ENCODE measurements at regions of chr2 and their contacts with region 1.

Region 1: DNA sequence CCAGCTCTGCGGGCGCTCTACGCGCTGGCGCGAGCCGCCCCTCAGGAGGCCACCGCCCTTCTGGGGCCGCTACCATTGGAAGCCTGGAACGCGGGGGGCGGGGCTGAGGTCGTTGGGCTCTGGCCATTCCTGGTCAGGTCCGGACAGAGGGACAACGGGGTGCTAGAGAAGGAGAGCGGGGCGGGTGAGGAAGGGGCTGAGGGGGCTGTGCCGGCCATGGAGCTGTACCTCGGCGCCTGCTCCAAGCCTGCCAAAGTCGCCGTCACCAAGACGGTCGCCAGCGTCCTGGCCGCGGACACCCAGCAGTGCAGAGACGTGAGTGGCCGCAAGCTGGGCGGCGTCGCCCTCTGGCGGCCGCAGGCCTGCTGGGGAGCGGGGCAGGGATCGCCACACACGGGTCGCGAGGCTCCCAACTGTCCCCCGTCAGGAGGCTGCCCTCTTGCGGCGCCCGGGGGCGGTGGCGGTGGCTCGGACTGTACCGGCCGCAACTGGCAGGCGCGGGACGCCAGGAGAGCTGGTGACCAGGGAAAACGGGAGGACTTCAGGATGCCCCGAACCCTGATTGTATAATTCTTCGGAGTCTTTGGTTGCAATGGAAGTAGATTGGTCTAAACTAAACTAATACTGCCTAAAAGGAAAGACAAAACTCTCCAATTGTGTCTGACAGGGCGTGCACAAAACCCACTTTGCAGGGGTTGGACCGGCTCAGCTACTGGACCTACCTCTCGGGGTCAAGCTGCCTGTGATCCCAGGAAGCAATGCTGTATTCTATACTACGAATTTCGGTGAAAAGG is at the start of gene FSIP2:
- DNase-seq: peak; percentile 89 to 95
- H3K4me3 ChIP-seq: peak within 1 kb of the TSS; percentile 47
- H3K4me1 ChIP-seq: no peaks in the 10 kb centered on the region
- H3K27me3 ChIP-seq: no peaks in the 10 kb centered on the region

Region 2: GRCh38 chr2:185208261-185208660 is 530.6 kb before region 1 on chr2:
- in situ Hi-C with region 1: loop called (anchors 10 kb)
- DNase-seq: peak; percentile 64 to 75
- H3K4me3 ChIP-seq: no peak overlapping the region
- H3K4me1 ChIP-seq: no peaks in the 10 kb centered on the region
- H3K27me3 ChIP-seq: no peaks in the 10 kb centered on the region

Region 3: GRCh38 chr2:185291035-185291647 is 447.7 kb before region 1 on chr2:
- in situ Hi-C with region 1: loop called (anchors 10 kb)
- DNase-seq: peak; percentile 61 to 77
- H3K4me3 ChIP-seq: no peak overlapping the region
- H3K4me1 ChIP-seq: no peaks in the 10 kb centered on the region
- H3K27me3 ChIP-seq: no peaks in the 10 kb centered on the region

Region 4: GRCh38 chr2:185522472-185522871 is 216.4 kb before region 1 on chr2:
- in situ Hi-C with region 1: loop called (anchors 25 kb)
- DNase-seq: no peak
- H3K4me3 ChIP-seq: no peak overlapping the region
- H3K4me1 ChIP-seq: no peaks in the 10 kb centered on the region
- H3K27me3 ChIP-seq: no peaks in the 10 kb centered on the region

Region 5: DNA sequence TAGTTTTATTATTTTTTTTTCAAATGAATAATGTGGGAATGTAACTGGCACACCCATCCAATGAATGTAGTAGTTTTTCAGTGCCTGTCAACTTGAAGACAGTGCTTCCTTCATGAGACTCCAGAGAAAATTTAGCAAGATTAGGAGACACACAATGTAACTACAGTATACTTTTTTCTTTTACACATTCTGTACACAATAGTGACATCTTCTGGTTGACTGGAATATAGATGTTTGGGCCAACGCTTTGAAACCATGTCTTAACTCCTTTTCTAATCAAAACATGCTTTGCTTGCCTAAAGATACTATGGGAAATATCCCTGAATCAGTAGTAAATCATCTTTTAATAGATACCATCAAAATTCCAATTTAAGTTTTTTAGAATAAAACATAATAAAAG is 517.7 kb after region 1 on chr2:
- in situ Hi-C with region 1: loop called (anchors 25 kb)
- DNase-seq: peak in 1 of 2 experiments; percentile 80
- H3K4me3 ChIP-seq: no peak overlapping the region
- H3K4me1 ChIP-seq: peaks cover 8% of the 10 kb centered on the region
- H3K27me3 ChIP-seq: no peaks in the 10 kb centered on the region